ENCODE measurements at regions of chr1 and their contacts with region 1.

Region 1: DNA sequence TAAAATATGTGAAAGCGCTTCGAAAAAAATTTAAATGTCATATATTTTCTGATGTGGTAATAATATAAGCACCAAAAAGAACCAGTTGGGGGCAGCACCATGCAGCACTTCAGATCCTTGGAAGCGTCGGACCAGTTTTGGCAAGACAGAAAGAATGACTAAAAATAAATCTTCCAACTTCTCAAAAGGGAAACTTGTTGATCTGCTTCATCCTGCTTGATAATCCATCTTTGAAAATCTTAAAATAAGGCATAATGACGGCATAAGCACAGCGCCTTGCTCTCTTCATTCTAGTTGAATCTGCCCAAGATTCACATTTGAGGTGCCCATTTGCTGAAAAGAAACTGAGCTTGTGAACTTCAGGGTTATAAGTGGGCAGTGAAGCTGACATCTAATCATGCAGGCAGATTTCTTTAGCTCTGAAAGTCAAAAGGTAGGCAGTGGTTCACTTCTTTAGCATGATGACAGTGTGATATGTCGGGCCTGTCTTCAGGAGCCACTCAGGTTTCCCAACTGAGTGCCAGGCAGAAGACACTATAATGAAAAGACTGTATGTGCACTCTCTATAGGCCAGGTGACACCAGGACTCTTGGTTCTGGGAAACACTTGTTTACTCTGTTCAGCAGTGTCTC is 19.8 kb upstream of the MUTYH start:
- DNase-seq: peak; percentile 37
- H3K4me3 ChIP-seq: no peak overlapping the region; a peak in 1 of 4 replicates
- H3K27ac ChIP-seq: no peak overlapping the region
- H3K4me1 ChIP-seq: 0 out of 4 replicates have a peak, but pooled peaks cover 0 to 5% of the 10 kb centered on the region in 2 experiments
- H3K27me3 ChIP-seq: no peaks in the 10 kb centered on the region
- CTCF ChIP-seq: peak; percentile 83
- EP300 ChIP-seq: no peak
- RAD21 ChIP-seq: peak; percentile 88

Region 2: DNA sequence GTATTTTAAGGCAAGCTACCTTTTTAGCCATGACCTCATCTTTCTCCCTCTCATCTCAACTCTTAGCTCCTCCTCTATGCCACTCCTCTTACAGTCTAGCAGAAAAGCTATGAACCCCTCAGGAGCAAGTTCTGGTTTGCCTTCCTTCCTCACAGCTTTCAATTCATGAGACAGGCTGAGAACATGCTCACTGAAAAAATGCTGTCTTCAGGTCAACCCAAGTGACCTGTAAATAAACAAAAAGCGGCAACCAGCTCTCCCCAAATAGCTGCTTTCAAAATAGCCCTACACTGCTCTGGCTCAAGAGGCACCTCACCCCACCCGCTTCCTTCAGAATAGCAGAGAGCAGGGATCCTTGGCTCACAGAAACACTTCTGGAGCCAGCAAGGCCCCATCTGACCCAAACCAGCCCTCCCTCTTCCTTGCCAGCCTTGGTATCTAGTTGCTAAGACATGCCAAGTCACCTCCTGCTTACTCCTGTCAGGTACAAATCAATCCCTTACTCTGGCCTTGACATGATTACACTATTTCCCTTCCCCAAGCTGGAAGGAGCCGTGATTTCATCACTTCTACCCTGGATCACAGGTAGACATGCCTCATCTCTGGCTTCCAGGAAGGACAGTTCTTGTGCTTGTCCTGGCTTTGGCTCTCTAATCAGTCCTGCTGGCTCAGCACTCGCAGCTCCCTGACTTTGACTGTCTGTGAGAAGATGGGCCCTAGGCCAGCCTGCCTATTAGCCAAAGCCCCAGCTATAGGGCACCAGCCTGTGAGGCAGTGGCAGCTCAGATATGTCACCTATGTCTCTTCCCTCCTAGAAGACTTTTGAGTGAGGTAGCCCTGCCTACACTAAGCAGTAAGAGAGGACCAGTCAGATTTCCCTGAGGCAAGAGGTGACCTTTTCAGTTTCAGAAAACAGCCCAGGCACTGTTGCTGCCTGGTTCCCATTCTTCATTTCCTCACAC is 11.0 kb before region 1 on chr1:
- CTCF ChIA-PET with region 1: interaction called, 26 read pairs
- POLR2A ChIA-PET with region 1: no interaction called
- DNase-seq: no peak
- H3K4me3 ChIP-seq: no peak overlapping the region
- H3K27ac ChIP-seq: no peak overlapping the region; a peak in 1 of 4 replicates
- H3K4me1 ChIP-seq: peaks cover 8 to 11% of the 10 kb centered on the region in 2 experiments; a peak in 2 of 4 replicates
- H3K27me3 ChIP-seq: no peaks in the 10 kb centered on the region
- CTCF ChIP-seq: no peak
- EP300 ChIP-seq: no peak
- RAD21 ChIP-seq: no peak

Region 3: GRCh38 chr1:45375104-45376090 is 15.4 kb after region 1 on chr1:
- CTCF ChIA-PET with region 1: interaction called, 15 read pairs
- POLR2A ChIA-PET with region 1: interaction called, 3 read pairs
- DNase-seq: no peak
- H3K4me3 ChIP-seq: no peak overlapping the region
- H3K27ac ChIP-seq: no peak overlapping the region
- H3K4me1 ChIP-seq: no peaks in the 10 kb centered on the region
- H3K27me3 ChIP-seq: no peaks in the 10 kb centered on the region
- CTCF ChIP-seq: no peak; the same call in 1 of the 2 replicates
- EP300 ChIP-seq: no peak
- RAD21 ChIP-seq: no peak

Region 4: DNA sequence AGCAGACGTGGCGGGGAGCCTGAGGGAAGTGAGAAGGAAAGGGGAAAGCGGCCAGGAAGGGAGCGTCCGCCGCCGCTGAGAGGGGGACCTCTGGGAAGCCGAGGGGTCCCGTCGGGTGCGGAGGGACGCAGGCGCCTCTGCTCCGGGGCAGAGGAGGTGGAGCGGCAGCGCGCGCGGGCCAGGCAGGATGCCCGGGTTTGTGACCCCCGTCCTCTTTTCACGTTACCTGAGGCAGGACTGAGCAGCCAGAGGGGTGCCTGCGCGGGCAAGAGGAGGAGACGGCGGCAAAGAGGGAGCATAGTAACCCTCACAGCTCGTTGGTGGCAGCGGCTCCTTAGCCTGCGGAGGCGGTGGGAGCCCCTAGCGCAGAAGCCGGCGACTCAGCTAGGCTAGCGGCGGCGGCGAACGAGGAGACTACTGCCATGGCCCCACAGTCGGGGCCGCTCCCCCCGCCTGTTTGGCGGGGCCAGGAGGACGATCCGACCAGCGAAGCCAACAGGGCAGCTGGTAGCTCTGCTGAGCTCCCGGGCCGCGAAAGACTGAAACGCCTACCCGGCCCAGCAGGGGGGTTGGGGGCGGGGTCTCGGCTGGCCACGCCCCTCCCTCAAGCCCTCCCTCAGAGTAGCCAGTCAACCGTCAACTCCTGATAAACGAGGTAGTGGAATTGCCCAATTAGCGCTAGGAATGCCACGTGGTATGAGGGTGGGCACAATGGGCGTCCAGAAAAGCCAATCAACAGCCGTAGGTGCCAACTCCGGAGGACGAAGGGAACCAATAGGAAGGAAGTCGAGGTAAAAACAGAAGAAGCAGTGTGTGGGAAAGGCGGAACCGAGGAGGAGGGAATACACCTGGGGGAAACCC is 130.9 kb after region 1 on chr1 and contains the start of gene TESK2:
- CTCF ChIA-PET with region 1: interaction called, 158 read pairs
- POLR2A ChIA-PET with region 1: no interaction called
- DNase-seq: peak; percentile 98
- H3K4me3 ChIP-seq: peak within 1 kb of the TSS; percentile 68 to 98
- H3K27ac ChIP-seq: peak within 1 kb of the TSS in 1 of 2 experiments; percentile 47; a peak in 2 of 4 replicates
- H3K4me1 ChIP-seq: peaks cover 0 to 5% of the 10 kb centered on the region in 2 experiments; a peak in 2 of 4 replicates
- H3K27me3 ChIP-seq: no peaks in the 10 kb centered on the region
- CTCF ChIP-seq: no peak
- EP300 ChIP-seq: no peak
- RAD21 ChIP-seq: no peak
- polyA plus RNA-seq, gene TESK2: 1.3 TPM in 2 replicates